ENCODE measurements at regions of chr17 and their contacts with region 1.

Region 1: DNA sequence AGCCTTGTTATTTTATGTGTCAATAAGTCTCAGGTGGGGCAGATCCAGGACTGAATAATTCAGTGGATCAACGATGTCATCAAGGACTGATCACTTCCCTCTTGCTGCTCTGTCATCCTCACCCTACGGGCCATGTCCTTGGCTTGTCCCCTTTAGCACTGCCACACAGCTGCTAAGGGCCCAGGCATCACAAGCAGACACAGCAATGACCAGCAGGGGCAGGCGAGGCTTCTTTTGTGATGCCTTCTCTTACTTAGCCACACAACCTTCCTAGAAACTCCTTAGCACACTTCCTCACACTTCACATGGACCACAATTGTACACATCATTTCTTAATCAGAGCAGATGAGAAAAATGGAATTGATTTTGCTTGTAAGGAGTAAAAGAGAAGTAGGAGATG is 356.3 kb upstream of the SOX9 start:
- DNase-seq: peak; percentile 43
- H3K4me3 Mint-ChIP-seq: no peak overlapping the region
- H3K27ac Mint-ChIP-seq: no peak overlapping the region
- H3K4me1 Mint-ChIP-seq: peaks cover 9% of the 10 kb centered on the region
- H3K27me3 Mint-ChIP-seq: no peaks in the 10 kb centered on the region
- CTCF ChIP-seq: peak; percentile 52

Region 2: GRCh38 chr17:71118039-71118438 is 646.5 kb before region 1 on chr17:
- CTCF ChIA-PET with region 1: interaction called, 3 read pairs
- intact Hi-C with region 1: loop called (anchors 5 kb)
- DNase-seq: peak; percentile 52
- H3K4me3 Mint-ChIP-seq: no peak overlapping the region
- H3K27ac Mint-ChIP-seq: no peak overlapping the region
- H3K4me1 Mint-ChIP-seq: peaks cover 9% of the 10 kb centered on the region
- H3K27me3 Mint-ChIP-seq: no peaks in the 10 kb centered on the region
- CTCF ChIP-seq: no peak

Region 3: GRCh38 chr17:71472809-71473789 is 291.4 kb before region 1 on chr17:
- CTCF ChIA-PET with region 1: interaction called, 11 read pairs
- intact Hi-C with region 1: loop called (anchors 1 kb)
- DNase-seq: peak; percentile 57
- H3K4me3 Mint-ChIP-seq: no peak overlapping the region
- H3K27ac Mint-ChIP-seq: no peak overlapping the region
- H3K4me1 Mint-ChIP-seq: peaks cover 27% of the 10 kb centered on the region
- H3K27me3 Mint-ChIP-seq: no peaks in the 10 kb centered on the region
- CTCF ChIP-seq: peak; percentile 68

Region 4: DNA sequence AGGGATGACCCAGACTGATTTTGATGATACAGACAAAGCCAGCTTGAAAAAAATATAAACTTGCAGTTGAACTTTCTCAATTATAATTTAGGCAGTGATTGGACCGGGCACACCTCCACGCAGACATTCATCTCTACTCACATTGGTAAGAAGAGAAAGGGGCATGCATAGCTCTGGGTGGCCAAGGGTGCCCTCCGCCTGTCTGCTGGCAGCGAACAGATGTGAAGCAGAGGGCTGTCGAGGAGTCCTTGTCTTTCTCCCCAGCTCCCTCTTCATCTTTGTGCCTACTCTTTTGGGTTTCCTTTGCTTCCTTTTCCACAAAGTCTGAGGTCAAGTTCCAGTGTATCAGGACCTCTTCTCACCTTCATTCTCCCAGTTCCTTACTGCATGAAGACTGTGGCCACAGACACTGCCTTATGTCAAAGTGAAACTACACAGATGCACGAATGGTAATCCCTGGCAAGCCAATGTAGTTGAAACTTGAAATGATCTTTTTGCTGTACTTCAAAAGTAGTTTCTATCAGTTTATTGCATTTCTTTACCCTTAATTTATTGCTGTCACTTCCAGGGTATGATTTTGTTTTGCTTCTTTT is 12.6 kb after region 1 on chr17:
- CTCF ChIA-PET with region 1: no interaction called
- intact Hi-C with region 1: no loop called
- DNase-seq: no peak
- H3K4me3 Mint-ChIP-seq: no peak overlapping the region
- H3K27ac Mint-ChIP-seq: no peak overlapping the region
- H3K4me1 Mint-ChIP-seq: no peaks in the 10 kb centered on the region
- H3K27me3 Mint-ChIP-seq: no peaks in the 10 kb centered on the region
- CTCF ChIP-seq: no peak

Region 5: DNA sequence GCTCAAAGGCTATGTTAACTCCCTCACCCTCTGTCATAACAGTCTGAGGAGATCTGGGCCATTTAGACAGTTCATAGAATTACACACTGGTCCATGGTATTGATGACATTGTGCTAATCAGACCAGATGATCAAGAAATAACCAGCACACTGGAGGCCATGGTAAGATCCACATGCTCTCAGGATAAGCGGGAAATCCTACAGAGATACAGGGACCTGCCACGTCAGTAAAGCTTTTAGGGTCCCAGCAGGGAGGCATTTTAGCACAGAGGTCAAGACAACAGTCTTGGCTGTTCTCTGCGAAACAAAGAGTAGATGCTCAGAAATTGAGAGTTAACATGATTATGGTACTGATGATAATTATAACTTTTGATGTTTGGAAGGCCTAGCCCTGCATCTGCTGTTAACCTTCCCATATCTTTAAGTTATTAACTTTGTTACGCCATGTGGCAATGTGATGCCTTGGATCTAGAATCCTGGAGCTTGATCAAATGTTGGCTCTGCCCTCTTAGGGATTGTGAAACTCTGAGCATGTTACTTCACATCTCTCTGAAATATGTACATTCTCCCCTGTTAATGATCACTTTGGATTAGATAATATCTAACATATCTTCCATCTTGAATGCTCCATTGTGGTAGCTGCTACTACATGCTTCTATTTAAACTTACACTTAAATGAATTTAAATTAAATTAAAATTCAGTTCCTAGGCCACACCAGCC is 184.4 kb after region 1 on chr17:
- CTCF ChIA-PET with region 1: no interaction called
- intact Hi-C with region 1: no loop called
- DNase-seq: no peak
- H3K4me3 Mint-ChIP-seq: no peak overlapping the region
- H3K27ac Mint-ChIP-seq: no peak overlapping the region
- H3K4me1 Mint-ChIP-seq: no peaks in the 10 kb centered on the region
- H3K27me3 Mint-ChIP-seq: no peaks in the 10 kb centered on the region
- CTCF ChIP-seq: no peak